Heart right ventricle (tissue), 16 donors: ENCODE measurements at regions of chr7 and their contacts with region 1.

Region 1: DNA sequence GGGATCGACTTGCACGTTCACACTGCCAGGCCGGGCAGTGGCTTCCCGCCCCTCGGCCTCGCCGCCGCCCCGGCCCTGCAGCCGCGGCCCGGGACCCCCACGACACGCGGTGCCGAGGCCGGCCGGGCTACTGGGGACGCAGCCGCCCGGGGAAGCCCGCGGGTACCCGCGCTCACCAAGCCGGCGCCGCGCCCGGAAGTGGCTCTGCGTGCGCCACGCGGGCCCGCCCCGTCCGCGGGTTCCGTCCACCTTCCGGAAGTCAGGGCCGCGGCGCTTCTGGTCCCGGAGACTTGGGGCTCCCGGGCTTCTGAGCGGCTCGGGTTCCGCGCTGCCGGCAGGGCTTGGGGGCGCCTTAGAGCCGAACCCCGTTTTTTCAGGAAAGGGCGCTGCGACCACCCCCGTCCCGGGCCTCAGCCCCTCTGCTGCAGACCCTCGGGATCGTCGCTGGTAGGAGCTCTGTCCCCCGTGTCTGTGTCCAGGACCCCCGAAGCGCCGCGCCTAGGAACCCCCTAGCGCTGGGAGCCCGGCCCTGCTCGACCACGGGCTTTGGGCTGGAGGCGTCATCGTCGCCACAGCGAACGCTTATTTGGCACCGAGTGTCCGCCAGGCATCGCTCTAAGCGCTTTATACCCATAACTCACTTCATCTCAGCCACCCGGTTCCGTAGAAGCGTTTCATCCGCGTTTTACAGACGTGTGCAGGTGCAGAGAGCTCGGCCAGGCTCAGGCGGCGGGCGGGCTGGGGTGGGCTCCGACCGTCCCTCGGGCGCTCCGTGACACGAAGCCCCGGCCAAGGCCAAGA is at the start of gene PSMG3:
- DNase-seq: peak; percentile 91 to 92
- ATAC-seq: peak; percentile 95 to 99 (median 97)
- H3K4me3 ChIP-seq: peak within 1 kb of the TSS; percentile 76 to 100 (median 89)
- H3K27ac ChIP-seq: peak within 1 kb of the TSS; percentile 81 to 97 (median 95)
- H3K4me1 ChIP-seq: peaks cover 5 to 41% (median 26%) of the 10 kb centered on the region in 9 donors
- H3K27me3 ChIP-seq: no peaks in the 10 kb centered on the region
- CTCF ChIP-seq: peak in 7 of 9 donors; percentile 4 to 58 (median 39)
- total RNA-seq, gene PSMG3: 7.3 to 14.1 (median 11.1) TPM

Region 2: GRCh38 chr7:1503816-1504775 is 65.9 kb before region 1 on chr7 and contains the start of gene INTS1:
- intact Hi-C with region 1: loop called in 1 of 10 experiments (anchors 5 kb)
- DNase-seq: peak; percentile 92 to 94
- ATAC-seq: peak; percentile 82 to 94 (median 90)
- H3K4me3 ChIP-seq: peak within 1 kb of the TSS; percentile 82 to 100 (median 94)
- H3K27ac ChIP-seq: peak within 1 kb of the TSS in 9 of 10 donors; percentile 59 to 89 (median 76)
- H3K4me1 ChIP-seq: peaks cover 12 to 36% (median 29%) of the 10 kb centered on the region in 9 donors
- H3K27me3 ChIP-seq: no peaks in the 10 kb centered on the region
- CTCF ChIP-seq: peak; percentile 75 to 98 (median 94)
- total RNA-seq, gene INTS1: 41.5 to 59.4 (median 45.4) TPM

Region 3: DNA sequence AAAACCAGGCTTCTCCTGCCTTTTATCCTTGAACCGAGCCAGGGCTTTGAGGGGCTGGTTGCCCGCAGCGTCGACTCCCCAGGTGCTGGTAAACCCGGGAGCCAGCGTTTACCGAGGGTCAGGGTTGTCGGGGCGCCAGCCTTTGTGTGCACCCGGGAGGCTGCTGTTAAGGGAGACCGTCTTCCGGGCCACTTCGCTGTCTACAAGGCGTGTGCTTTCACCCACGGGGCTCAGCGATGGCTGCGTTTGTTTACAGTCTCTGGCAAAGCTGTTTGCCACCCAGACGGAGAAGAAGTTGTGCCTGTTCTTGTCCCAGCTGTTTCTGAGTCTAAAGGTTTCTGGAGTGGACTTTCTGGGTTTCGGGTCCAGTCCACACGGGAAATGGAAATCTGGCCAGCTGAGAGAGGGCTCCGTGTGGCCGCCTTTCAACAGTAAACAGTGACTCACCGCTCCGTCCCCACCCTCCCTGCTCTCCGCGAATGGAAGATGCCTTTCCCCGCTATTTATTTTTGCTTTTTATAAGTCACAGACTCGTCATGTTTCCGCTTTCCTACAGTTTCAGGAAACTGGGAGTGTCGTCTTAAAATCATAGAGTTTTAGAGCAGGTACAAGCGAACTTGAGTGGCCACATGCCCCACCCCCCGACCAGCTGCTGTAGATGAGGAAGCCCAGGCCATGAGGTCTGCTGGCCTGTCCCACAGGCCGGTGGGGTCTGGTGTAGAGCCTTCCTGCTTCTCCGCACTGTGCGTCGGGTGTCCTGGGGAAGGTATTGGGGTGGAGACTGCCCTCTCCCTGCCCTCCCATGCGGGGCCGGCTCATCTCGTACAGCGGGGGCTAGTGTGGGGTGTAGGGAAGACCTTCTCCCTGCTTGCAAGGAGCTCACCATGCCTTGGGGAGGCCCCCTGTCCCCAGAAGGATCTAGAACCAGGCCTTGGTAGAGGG is 37.3 kb before region 1 on chr7:
- intact Hi-C with region 1: loop called in 2 of 10 experiments (anchors 5 kb)
- DNase-seq: peak; percentile 69 to 88
- ATAC-seq: peak; percentile 19 to 62 (median 38)
- H3K4me3 ChIP-seq: peak overlapping the region in 9 of 10 donors; percentile 60 to 73 (median 66)
- H3K27ac ChIP-seq: peak overlapping the region; percentile 69 to 100 (median 98)
- H3K4me1 ChIP-seq: peaks cover 19 to 69% (median 60%) of the 10 kb centered on the region in 9 donors
- H3K27me3 ChIP-seq: no peaks in the 10 kb centered on the region
- CTCF ChIP-seq: no peak

Region 4: DNA sequence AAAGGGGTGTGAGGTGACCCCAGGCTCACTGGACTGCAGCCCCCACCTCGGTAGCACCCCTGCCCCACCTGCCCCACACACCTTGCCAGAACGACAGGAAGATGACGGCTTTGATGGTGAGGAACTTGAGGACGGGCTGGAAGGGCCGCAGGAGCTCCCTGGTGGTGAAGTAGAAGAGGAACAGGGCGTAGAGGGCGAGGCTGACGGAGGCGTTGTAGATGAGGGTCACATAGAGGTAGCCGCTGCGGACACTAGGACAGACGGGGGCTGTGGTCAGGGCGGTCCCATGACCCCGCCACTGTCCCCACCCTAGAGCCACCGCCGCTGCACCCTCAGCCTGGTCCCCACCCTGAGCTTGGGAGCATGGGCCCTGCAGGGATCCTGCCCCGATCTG is 21.6 kb before region 1 on chr7:
- intact Hi-C with region 1: no loop called
- DNase-seq: no peak
- ATAC-seq: no peak
- H3K4me3 ChIP-seq: no peak overlapping the region
- H3K27ac ChIP-seq: no peak overlapping the region
- H3K4me1 ChIP-seq: peaks cover 0 to 20% (median 8%) of the 10 kb centered on the region in 9 donors
- H3K27me3 ChIP-seq: no peaks in the 10 kb centered on the region
- CTCF ChIP-seq: no peak

Region 5: GRCh38 chr7:1758028-1758858 is 188.2 kb after region 1 on chr7:
- intact Hi-C with region 1: loop called in 2 of 10 experiments (anchors 5 to 10 kb)
- DNase-seq: peak; percentile 46 to 56
- ATAC-seq: peak; percentile 64 to 87 (median 80)
- H3K4me3 ChIP-seq: no peak overlapping the region
- H3K27ac ChIP-seq: peak overlapping the region in 5 of 10 donors; percentile 50 to 71 (median 64)
- H3K4me1 ChIP-seq: peaks cover 0 to 13% (median 0%) of the 10 kb centered on the region in 9 donors
- H3K27me3 ChIP-seq: peaks cover 0 to 7% (median 0%) of the 10 kb centered on the region in 7 donors
- CTCF ChIP-seq: peak; percentile 23 to 60 (median 49)

Region 6: GRCh38 chr7:2082139-2082998 is 512.3 kb after region 1 on chr7:
- intact Hi-C with region 1: loop called in 1 of 10 experiments (anchors 10 kb)
- DNase-seq: no peak
- ATAC-seq: peak in 5 of 8 donors; percentile 17 to 58 (median 35)
- H3K4me3 ChIP-seq: no peak overlapping the region
- H3K27ac ChIP-seq: no peak overlapping the region
- H3K4me1 ChIP-seq: peaks cover 0 to 4% (median 0%) of the 10 kb centered on the region in 9 donors
- H3K27me3 ChIP-seq: no peaks in the 10 kb centered on the region
- CTCF ChIP-seq: no peak

Region 7: GRCh38 chr7:2214636-2215035 is 644.6 kb after region 1 on chr7:
- intact Hi-C with region 1: loop called in 2 of 10 experiments (anchors 5 to 10 kb)
- DNase-seq: no peak
- ATAC-seq: peak in 4 of 8 donors; percentile 22 to 39 (median 24)
- H3K4me3 ChIP-seq: no peak overlapping the region
- H3K27ac ChIP-seq: peak overlapping the region in 9 of 10 donors; percentile 31 to 79 (median 72)
- H3K4me1 ChIP-seq: peaks cover 0 to 28% (median 10%) of the 10 kb centered on the region in 9 donors
- H3K27me3 ChIP-seq: no peaks in the 10 kb centered on the region
- CTCF ChIP-seq: no peak